WTC11 (cell line): ENCODE measurements at regions of chr13 and their contacts with region 1.

Region 1: DNA sequence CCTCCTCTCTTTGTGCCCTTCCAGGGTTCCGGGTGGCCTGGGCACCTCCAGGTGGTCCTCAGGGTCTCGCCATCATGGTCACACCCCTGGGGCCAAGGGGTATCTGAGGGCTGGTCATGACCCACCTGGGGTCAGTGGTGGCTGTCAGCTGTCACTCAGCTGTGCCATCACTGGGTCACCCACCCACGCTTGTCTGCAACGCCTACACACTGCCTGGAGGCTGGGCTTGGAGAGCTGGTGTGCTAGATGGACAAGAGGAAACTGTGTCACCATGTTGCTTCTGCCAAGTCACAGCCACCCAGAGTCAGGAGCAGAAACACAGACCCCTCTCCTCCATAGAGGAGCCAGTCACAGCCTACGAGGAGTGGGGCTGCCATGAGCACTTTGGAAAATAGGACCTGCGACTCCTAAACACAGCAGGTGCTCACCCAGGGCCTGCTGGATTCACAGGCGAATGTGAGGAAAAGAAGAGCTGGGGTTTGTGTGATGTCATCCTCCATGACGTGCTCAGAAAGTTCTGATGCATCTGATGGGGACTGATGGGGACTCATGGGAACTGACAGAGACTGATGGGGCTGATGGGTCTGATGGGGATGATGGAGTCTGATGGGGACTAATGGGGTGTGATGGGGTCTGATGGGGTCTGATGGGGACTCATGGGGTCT is 10.7 kb upstream of the GRTP1 start:
- DNase-seq: no peak
- ATAC-seq: no peak
- H3K4me3 Mint-ChIP-seq: no peak overlapping the region
- H3K27ac Mint-ChIP-seq: peak overlapping the region; percentile 68
- H3K4me1 Mint-ChIP-seq: peaks cover 42% of the 10 kb centered on the region
- H3K27me3 Mint-ChIP-seq: peaks cover 15% of the 10 kb centered on the region
- CTCF ChIP-seq: no peak

Region 2: GRCh38 chr13:113138792-113139551 is 235.7 kb before region 1 on chr13:
- CTCF ChIA-PET with region 1: no interaction called
- POLR2A ChIA-PET with region 1: no interaction called
- DNase-seq: no peak
- ATAC-seq: no peak
- H3K4me3 Mint-ChIP-seq: no peak overlapping the region
- H3K27ac Mint-ChIP-seq: no peak overlapping the region; the same call in 1 of the 2 replicates
- H3K4me1 Mint-ChIP-seq: peaks cover 11% of the 10 kb centered on the region
- H3K27me3 Mint-ChIP-seq: no peaks in the 10 kb centered on the region
- CTCF ChIP-seq: no peak

Region 3: GRCh38 chr13:113364311-113364889 is 10.2 kb before region 1 on chr13:
- CTCF ChIA-PET with region 1: interaction called, 6 read pairs
- POLR2A ChIA-PET with region 1: interaction called, 13 read pairs
- DNase-seq: peak; percentile 39
- ATAC-seq: no peak
- H3K4me3 Mint-ChIP-seq: no peak overlapping the region
- H3K27ac Mint-ChIP-seq: no peak overlapping the region
- H3K4me1 Mint-ChIP-seq: peaks cover 17% of the 10 kb centered on the region
- H3K27me3 Mint-ChIP-seq: no peaks in the 10 kb centered on the region
- CTCF ChIP-seq: no peak